ENCODE measurements at regions of chr7 and their contacts with region 1.

Region 1: DNA sequence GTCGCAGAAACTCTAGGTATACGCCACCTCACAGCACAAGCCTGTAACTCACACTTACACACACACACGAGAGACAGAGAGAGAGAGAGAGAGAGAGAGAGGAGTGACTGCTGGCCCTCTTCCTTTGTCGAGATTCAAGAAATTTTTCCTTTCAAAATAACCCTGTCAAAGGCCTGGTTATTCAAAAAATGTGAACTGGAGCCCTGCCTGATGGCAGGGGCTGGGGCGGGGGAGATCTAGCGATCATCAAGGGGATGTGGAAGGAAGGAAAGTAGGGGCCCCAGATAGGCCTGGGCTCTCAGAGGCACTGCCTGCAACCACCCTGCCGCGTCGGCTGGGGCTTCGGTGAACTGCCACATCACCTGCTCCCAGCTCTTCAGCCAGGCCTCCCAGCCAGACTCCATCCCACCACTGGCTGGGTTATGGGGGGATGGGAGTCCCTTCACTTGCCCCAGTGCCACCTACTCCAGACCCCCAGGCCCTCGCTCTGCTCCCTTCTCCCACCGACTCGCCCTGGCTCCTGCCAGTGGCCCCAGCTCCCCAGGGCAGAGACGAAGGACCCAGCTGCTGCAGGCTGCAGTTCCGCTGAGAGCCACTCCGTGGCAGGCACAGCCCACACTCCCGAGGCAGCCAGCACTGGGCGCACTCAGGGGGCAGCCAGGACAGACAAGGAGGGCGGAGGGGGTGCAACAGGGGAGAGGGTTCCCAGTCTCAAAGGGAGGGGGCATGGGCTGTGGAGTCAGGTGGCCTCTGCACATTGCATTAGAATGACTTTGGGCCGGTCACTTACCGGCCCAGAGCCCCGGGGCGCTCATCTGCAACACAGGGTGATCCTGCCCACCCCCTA is 15.3 kb downstream of the KCNH2 start:
- DNase-seq: peak; percentile 38 to 92
- ATAC-seq: peak; percentile 85 to 93
- H3K4me3 ChIP-seq: no peak overlapping the region
- H3K27ac ChIP-seq: no peak overlapping the region
- H3K4me1 ChIP-seq: no peaks in the 10 kb centered on the region
- CTCF ChIP-seq: peak; percentile 71
- EP300 ChIP-seq: no peak
- POLR2A ChIP-seq: no peak
- RAD21 ChIP-seq: peak; percentile 84 to 88

Region 2: GRCh38 chr7:150898475-150899011 is 64.2 kb before region 1 on chr7:
- CTCF ChIA-PET with region 1: interaction called, 18 read pairs
- POLR2A ChIA-PET with region 1: no interaction called
- DNase-seq: peak; percentile 68 to 79
- ATAC-seq: peak; percentile 83 to 95
- H3K4me3 ChIP-seq: no peak overlapping the region
- H3K27ac ChIP-seq: no peak overlapping the region
- H3K4me1 ChIP-seq: no peaks in the 10 kb centered on the region
- CTCF ChIP-seq: peak; percentile 84
- EP300 ChIP-seq: no peak
- POLR2A ChIP-seq: no peak
- RAD21 ChIP-seq: peak; percentile 73 to 74

Region 3: GRCh38 chr7:150974468-150975391 is 12.0 kb after region 1 on chr7:
- CTCF ChIA-PET with region 1: interaction called, 25 read pairs
- POLR2A ChIA-PET with region 1: no interaction called
- DNase-seq: peak; percentile 44 to 71
- ATAC-seq: peak; percentile 54 to 77
- H3K4me3 ChIP-seq: peak overlapping the region; percentile 83
- H3K27ac ChIP-seq: peak overlapping the region; percentile 74 to 84
- H3K4me1 ChIP-seq: peaks cover 34% of the 10 kb centered on the region
- CTCF ChIP-seq: peak; percentile 40
- EP300 ChIP-seq: no peak
- POLR2A ChIP-seq: peak; percentile 91
- RAD21 ChIP-seq: no peak

Region 4: DNA sequence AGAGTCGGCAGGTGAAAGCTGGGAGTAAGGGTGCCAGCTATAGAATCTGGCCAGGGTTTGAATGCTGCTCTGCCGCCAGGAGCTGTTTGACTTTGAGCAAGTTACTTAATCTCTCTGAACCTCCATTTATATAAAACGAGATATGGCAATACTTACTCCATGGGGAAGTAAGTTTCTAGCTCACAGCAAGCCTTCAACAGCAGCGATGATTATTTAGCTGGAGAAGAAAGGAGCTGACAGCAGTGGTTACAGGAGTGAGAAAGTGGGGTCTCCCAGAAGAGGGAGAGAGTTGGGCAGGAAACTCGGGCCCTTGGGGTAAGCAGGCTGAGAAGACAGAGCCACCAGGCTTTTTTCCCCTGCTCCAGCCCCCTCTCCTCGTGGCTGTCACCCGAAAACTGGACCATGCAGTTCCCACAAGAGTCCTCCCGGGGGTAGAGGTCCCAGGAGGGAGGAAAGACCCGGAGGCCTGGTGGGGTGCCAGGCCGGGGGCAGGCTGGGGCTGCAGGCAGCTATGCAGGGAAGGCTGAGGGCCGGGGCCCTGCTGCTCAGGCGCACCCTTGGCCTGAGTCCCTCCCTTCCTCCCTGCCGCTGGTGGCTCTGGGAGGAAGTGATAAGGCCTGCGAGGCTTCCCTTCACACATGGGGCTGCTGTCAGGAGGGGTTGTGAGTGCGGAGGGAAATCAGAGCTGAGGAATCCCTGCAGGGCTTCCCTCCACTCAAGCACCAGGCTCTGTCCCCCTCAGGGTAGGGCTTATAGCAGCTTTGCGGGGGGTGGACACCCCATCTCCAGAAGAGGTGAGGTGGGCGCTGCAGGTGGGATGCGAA is 31.6 kb after region 1 on chr7:
- CTCF ChIA-PET with region 1: interaction called, 27 read pairs
- POLR2A ChIA-PET with region 1: no interaction called
- DNase-seq: no peak
- ATAC-seq: peak; percentile 40 to 62; a peak in 5 of 6 replicates
- H3K4me3 ChIP-seq: no peak overlapping the region
- H3K27ac ChIP-seq: no peak overlapping the region
- H3K4me1 ChIP-seq: no peaks in the 10 kb centered on the region
- CTCF ChIP-seq: no peak
- EP300 ChIP-seq: no peak
- POLR2A ChIP-seq: no peak
- RAD21 ChIP-seq: no peak

Region 5: DNA sequence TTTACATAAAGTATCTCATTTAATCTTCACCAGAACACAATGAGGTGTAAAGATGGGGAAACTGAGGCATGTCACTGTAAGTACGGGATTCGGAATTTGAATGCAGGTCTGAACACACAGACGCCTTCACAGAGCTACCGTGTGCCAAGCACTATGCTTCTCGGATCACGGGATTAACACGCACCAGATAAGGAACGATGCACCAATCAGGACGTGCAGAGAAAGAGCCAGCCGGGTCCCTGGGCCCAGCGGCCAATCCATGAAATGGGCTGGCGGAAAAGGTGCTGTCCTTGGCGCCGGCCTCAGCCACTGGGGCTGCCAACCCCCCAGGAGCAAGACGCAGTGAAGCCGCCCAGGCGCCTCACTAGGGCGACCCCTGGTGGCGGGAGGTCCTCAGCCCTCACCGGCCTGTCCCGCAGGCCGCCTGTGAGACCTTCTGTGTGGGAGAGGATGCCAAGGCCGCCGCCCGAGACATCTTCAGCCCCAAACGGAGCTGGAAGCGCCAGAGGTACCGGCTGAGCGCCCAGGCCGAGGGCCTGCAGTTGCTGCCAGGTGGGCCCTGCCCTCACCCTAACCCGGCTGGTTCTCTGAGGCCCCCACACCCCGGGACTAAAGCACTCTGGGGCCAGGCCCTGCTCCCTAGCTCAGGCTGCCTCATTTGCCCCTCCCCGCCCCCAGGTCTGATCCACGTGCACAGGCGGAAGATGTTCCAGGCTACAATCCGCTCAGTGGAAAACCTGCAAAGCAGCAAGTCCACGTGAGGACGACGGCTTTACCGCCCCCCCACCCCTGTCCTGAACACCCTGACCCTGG is 45.9 kb after region 1 on chr7:
- CTCF ChIA-PET with region 1: interaction called, 36 read pairs
- POLR2A ChIA-PET with region 1: no interaction called
- DNase-seq: peak; percentile 41 to 50
- ATAC-seq: peak in 1 of 2 experiments; percentile 74; a peak in 3 of 6 replicates
- H3K4me3 ChIP-seq: no peak overlapping the region
- H3K27ac ChIP-seq: no peak overlapping the region
- H3K4me1 ChIP-seq: peaks cover 23% of the 10 kb centered on the region; the same call in 1 of the 3 replicates
- CTCF ChIP-seq: peak; percentile 41; the same call in 2 of the 3 replicates
- EP300 ChIP-seq: no peak
- POLR2A ChIP-seq: no peak
- RAD21 ChIP-seq: no peak

Region 6: GRCh38 chr7:151028131-151028947 is 65.6 kb after region 1 on chr7 and contains the start of gene ABCB8:
- CTCF ChIA-PET with region 1: interaction called, 15 read pairs
- POLR2A ChIA-PET with region 1: no interaction called
- DNase-seq: peak; percentile 99 to 100
- ATAC-seq: peak; percentile 95 to 96
- H3K4me3 ChIP-seq: peak within 1 kb of the TSS; percentile 49
- H3K27ac ChIP-seq: peak within 1 kb of the TSS; percentile 73 to 90
- H3K4me1 ChIP-seq: peaks cover 21% of the 10 kb centered on the region; the same call in 2 of the 3 replicates
- CTCF ChIP-seq: peak; percentile 53
- EP300 ChIP-seq: no peak
- POLR2A ChIP-seq: peak; percentile 61
- RAD21 ChIP-seq: peak; percentile 56 to 65
- polyA plus RNA-seq, gene ABCB8: 19.6 and 22.7 TPM in 2 replicates

Measured in A549 (cell line).